WTC11 (cell line): ENCODE measurements at regions of chr1 and their contacts with region 1.

Region 1: DNA sequence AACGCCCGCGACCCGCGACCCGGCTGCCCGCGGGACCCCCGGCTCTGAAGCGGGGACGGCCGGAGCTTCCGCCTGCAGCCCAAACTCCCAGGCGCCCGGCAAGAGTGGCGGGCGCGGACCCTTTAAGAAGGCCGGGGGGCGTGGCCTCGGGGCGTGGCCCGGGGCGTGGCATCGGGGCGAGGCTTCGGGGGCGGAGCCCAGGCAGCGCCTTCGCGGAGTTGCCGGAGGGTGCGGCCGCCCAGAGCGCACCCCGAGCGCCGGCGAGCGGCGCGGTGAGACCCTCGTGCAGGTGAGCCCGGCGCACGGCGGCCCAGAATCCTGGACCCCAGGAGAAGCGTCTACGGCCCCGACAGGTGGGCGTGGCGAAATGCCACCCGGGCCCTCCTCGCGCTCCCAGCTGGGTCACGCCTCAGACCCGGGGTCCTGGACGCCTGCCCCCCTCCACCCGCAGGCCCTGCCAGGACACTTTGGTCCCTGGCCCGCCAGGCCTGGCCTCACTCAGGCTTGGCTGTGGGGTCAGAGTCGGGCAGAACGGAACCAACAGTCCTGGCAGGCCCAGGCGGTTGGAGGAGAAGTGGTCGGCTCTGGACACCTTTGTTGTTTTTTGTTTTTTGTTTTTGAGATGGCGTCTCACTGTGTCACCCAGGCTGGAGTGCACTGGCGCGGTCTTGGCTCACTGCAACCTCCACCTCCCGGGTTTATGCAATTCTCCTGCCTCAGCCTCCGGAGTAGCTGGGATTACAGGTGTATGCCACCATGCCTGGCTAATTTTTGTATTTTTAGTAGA is 14.4 kb downstream of the RNF223 start:
- DNase-seq: peak; percentile 91
- ATAC-seq: peak; percentile 65
- H3K4me3 Mint-ChIP-seq: peak overlapping the region; percentile 57
- H3K27ac Mint-ChIP-seq: no peak overlapping the region
- H3K4me1 Mint-ChIP-seq: peaks cover 8% of the 10 kb centered on the region; the same call in 1 of the 2 replicates
- H3K27me3 Mint-ChIP-seq: peaks cover 53% of the 10 kb centered on the region
- CTCF ChIP-seq: no peak; the same call in 1 of the 2 replicates

Region 2: DNA sequence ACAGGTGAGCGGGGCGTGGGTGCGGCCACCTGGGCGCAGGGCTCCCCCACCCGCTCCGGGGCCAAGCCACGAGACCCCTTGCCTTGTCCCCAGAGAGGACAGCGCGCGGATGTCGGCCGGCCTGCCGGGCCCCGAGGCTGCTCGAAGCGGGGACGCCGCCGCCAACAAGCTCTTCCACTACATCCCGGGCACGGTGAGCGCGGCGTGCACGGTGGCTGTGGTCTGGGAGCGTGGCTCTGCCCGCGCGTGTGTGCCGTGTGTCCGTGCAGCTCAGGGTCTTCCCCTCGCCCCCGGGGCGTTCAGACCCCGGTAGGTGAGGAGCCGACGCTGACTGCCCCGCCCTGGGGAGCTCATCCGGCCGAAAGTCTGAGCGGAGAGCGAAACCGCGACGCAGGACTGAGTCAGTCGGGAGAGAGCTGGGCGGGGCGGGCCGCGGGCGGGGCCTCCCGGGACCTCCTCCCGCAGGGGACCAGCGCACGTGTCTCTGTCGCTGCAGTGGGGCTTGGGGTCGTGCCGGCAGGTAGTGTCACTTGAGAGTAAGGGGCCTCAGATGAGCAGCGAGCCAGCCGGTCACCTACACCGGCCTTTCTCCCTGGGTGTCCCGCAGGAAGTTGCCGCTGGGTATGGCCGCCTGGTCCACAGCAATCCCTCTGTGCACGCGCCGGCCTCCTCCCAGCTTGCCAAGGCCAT is 92.9 kb before region 1 on chr1:
- CTCF ChIA-PET with region 1: interaction called, 21 read pairs
- POLR2A ChIA-PET with region 1: interaction called, 3 read pairs
- DNase-seq: peak; percentile 69
- ATAC-seq: peak; percentile 46
- H3K4me3 Mint-ChIP-seq: peak overlapping the region; percentile 62
- H3K27ac Mint-ChIP-seq: no peak overlapping the region
- H3K4me1 Mint-ChIP-seq: no peaks in the 10 kb centered on the region
- H3K27me3 Mint-ChIP-seq: peaks cover 40% of the 10 kb centered on the region
- CTCF ChIP-seq: no peak

Region 3: DNA sequence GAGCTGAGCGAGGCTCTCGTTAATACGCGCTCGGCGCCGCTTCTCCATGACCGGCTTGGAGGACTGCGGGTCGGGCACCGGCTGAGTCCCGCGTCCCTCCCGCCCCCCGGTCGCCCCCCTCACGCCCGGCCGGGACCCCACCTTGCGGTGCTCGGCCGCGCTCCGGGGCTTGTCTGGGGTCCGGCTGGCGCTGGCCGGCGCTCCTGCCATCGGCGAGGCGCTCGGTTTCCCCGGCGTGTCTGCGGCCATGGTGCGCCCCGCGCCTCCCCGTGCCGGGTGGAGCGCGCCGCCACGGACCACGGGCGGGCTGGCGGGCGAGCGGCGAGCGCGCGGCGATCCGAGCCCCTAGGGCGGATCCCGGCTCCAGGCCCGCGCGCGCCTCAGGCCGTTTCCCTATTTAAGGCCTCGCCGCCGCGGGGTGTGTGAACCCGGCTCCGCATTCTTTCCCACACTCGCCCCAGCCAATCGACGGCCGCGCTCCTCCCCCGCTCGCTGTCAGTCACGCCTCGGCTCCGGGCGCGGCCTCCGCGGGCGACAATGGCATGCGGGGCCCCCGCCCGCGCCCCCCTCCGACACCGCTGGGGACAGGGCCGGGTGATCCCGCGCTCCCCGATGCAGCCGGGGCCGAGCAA is 59.8 kb before region 1 on chr1 and contains the start of gene HES4:
- CTCF ChIA-PET with region 1: interaction called, 21 read pairs
- POLR2A ChIA-PET with region 1: no interaction called
- DNase-seq: peak; percentile 92
- ATAC-seq: peak; percentile 51
- H3K4me3 Mint-ChIP-seq: peak within 1 kb of the TSS; percentile 70
- H3K27ac Mint-ChIP-seq: peak within 1 kb of the TSS; percentile 92; the same call in 1 of the 2 replicates
- H3K4me1 Mint-ChIP-seq: peaks cover 10% of the 10 kb centered on the region
- H3K27me3 Mint-ChIP-seq: peaks cover 76% of the 10 kb centered on the region
- CTCF ChIP-seq: no peak
- total RNA-seq, gene HES4: 4.5 to 10.7 TPM (median 8.3 TPM) in 3 replicates

Region 4: DNA sequence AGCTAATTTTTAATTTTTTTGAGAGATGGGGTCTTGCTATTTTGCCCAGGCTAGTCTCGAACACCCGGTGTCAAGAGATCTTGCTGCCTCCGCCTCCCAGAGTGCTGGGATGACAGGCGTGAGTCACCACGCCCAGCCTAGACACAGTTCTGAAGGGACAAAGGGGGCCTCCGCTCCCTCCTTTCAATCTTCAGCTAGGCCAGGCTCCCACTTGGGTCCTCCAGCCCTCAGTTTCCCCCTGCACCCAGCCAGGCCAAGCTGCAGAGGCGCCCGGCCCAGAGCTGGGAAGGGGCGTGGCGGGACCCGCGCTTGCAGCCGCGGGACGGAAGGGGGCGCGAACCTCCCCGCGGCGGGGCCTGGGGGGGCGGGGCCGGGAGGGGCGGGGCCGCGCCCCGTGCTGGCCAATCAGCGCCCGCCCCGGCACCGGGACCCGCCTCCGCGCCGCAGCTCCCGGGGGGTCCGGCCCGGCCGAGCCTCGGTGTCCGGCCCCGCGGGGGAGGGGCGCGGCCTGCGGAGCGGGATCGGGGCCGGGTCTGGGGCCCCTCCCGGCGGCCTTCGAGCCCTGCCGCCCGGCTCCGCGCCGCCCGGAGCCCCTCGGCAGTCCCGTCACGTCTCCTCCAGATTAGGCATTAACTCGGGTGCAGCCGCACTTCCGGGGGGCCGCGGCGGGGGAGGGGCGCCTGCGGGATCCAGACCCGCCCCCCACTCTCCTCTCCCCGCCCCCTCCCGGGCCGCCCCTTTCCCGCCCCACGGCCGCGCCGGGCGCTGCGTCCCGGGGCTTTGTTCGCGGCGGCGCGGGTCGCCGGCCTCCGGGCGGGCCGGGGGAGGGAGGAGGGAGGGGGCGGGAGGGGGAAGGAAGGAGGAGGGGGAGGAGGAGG is 40.3 kb before region 1 on chr1:
- CTCF ChIA-PET with region 1: interaction called, 33 read pairs
- POLR2A ChIA-PET with region 1: no interaction called
- DNase-seq: peak; percentile 78
- ATAC-seq: peak; percentile 79
- H3K4me3 Mint-ChIP-seq: peak overlapping the region; percentile 34
- H3K27ac Mint-ChIP-seq: no peak overlapping the region
- H3K4me1 Mint-ChIP-seq: peaks cover 37% of the 10 kb centered on the region
- H3K27me3 Mint-ChIP-seq: peaks cover 17% of the 10 kb centered on the region
- CTCF ChIP-seq: no peak

Region 5: GRCh38 chr1:1040004-1040991 is 19.4 kb before region 1 on chr1:
- CTCF ChIA-PET with region 1: interaction called, 35 read pairs
- POLR2A ChIA-PET with region 1: no interaction called
- DNase-seq: peak; percentile 83
- ATAC-seq: peak; percentile 85
- H3K4me3 Mint-ChIP-seq: peak overlapping the region; percentile 58
- H3K27ac Mint-ChIP-seq: no peak overlapping the region
- H3K4me1 Mint-ChIP-seq: peaks cover 5% of the 10 kb centered on the region
- H3K27me3 Mint-ChIP-seq: peaks cover 41% of the 10 kb centered on the region
- CTCF ChIP-seq: no peak

Region 6: GRCh38 chr1:1079408-1080121 is 19.9 kb after region 1 on chr1:
- CTCF ChIA-PET with region 1: interaction called, 14 read pairs
- POLR2A ChIA-PET with region 1: no interaction called
- DNase-seq: peak; percentile 65
- ATAC-seq: peak; percentile 75
- H3K4me3 Mint-ChIP-seq: peak overlapping the region; percentile 43
- H3K27ac Mint-ChIP-seq: no peak overlapping the region
- H3K4me1 Mint-ChIP-seq: no peaks in the 10 kb centered on the region
- H3K27me3 Mint-ChIP-seq: no peaks in the 10 kb centered on the region
- CTCF ChIP-seq: no peak

Region 7: DNA sequence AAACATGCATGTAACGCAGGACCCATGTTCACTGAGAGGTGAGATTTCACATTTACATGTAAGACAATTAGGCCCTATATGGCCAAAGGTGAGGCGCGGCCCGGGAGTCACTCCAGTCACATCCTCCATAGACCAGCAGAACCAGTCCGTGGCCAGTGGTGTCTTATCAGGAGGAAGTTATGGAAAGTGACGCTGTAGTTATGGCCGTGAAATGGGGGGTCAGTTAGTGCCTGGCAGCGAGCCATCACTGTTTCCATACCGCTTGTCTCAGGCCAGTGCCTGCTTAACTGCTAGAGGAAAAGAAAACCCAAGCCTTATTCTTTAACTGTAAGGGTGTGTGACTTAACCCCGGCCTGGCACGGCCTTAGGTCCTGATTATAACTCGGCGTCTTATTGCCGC is 50.1 kb after region 1 on chr1:
- CTCF ChIA-PET with region 1: no interaction called
- POLR2A ChIA-PET with region 1: no interaction called
- DNase-seq: no peak
- ATAC-seq: no peak
- H3K4me3 Mint-ChIP-seq: no peak overlapping the region
- H3K27ac Mint-ChIP-seq: no peak overlapping the region
- H3K4me1 Mint-ChIP-seq: peaks cover 13% of the 10 kb centered on the region
- H3K27me3 Mint-ChIP-seq: peaks cover 9% of the 10 kb centered on the region; the same call in 1 of the 2 replicates
- CTCF ChIP-seq: no peak

Region 8: DNA sequence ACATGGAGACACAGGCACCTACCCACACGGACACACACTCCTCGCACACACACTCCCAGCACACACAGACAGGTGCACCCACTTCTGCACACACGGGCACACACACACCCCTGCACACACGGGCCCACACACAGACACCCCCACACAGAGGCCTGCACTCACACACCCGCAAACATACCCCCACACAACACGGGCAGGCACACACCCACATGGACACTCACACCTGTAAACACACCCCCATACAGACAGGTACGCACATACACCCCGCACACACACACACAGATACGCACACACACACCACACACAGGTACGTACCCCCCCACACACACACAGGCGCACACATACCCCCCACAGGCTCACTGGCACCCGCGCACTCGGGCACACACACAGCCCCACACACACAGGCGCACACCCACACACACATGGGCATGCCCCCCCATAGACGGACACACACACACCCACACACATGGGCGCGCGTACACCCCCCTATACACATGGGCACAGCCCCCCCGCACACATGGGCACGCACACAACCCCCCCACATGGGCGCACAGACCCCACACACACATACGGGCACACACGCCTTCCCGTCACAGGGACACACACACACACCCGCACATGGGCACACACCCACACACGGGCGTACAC is 458.4 kb after region 1 on chr1:
- CTCF ChIA-PET with region 1: no interaction called
- POLR2A ChIA-PET with region 1: no interaction called
- DNase-seq: no peak
- ATAC-seq: no peak
- H3K4me3 Mint-ChIP-seq: no peak overlapping the region
- H3K27ac Mint-ChIP-seq: no peak overlapping the region
- H3K4me1 Mint-ChIP-seq: peaks cover 3% of the 10 kb centered on the region; the same call in 1 of the 2 replicates
- H3K27me3 Mint-ChIP-seq: no peaks in the 10 kb centered on the region
- CTCF ChIP-seq: no peak